ENCODE measurements at regions of chr4 and their contacts with region 1.

Region 1: DNA sequence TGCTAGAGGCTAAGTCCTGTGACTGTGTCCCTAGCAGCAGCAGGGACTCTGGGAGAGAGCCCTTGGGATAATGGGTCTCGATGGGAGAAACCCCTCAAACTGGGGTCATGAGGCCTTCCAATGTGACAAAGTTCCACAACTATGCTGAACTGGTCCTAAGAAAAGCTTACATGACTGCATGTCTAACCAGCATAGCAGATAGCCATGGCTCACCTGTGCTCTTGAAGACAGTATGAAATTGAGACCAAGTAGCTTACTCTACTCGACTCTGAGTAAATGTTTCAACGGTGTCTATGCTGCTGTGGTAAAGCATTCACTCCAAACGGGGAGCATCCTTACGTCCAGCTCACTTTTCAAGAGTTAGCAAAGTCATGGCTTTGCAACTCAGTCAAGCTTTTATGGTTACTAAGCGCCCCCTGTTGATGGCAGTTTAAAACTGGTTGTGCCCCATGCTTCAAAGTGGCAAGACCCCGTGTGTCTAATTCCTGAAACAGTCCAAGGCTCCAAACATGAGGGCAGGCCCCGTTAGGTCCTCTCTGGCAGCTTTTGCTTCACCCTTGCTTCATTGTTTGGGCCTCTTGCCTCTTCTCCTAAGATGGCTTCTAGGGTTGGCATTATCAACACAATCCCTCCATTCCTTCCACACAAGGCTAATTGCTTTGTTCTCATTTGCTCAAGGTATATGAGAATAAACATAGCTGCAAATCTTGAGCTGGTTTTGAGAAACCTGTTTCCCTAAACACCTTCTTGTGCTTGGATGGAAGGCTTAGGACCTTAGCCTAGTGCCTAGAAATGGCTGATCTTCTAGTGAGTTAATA is 46.6 kb downstream of the CCNG2 start:
- DNase-seq: peak; percentile 61
- H3K4me3 ChIP-seq: no peak overlapping the region
- H3K27ac ChIP-seq: no peak overlapping the region
- H3K27me3 ChIP-seq: peaks cover 16% of the 10 kb centered on the region
- CTCF ChIP-seq: peak; percentile 82

Region 2: GRCh38 chr4:76511947-76512346 is 691.6 kb before region 1 on chr4:
- CTCF ChIA-PET with region 1: interaction called, 16 read pairs
- POLR2A ChIA-PET with region 1: no interaction called
- DNase-seq: no peak
- H3K4me3 ChIP-seq: no peak overlapping the region
- H3K27ac ChIP-seq: no peak overlapping the region
- H3K27me3 ChIP-seq: no peaks in the 10 kb centered on the region
- CTCF ChIP-seq: no peak

Region 3: GRCh38 chr4:77065382-77065781 is 138.2 kb before region 1 on chr4:
- CTCF ChIA-PET with region 1: interaction called, 33 read pairs
- POLR2A ChIA-PET with region 1: interaction called, 3 read pairs
- DNase-seq: no peak
- H3K4me3 ChIP-seq: no peak overlapping the region
- H3K27ac ChIP-seq: peak overlapping the region; percentile 54
- H3K27me3 ChIP-seq: no peaks in the 10 kb centered on the region
- CTCF ChIP-seq: no peak

Region 4: DNA sequence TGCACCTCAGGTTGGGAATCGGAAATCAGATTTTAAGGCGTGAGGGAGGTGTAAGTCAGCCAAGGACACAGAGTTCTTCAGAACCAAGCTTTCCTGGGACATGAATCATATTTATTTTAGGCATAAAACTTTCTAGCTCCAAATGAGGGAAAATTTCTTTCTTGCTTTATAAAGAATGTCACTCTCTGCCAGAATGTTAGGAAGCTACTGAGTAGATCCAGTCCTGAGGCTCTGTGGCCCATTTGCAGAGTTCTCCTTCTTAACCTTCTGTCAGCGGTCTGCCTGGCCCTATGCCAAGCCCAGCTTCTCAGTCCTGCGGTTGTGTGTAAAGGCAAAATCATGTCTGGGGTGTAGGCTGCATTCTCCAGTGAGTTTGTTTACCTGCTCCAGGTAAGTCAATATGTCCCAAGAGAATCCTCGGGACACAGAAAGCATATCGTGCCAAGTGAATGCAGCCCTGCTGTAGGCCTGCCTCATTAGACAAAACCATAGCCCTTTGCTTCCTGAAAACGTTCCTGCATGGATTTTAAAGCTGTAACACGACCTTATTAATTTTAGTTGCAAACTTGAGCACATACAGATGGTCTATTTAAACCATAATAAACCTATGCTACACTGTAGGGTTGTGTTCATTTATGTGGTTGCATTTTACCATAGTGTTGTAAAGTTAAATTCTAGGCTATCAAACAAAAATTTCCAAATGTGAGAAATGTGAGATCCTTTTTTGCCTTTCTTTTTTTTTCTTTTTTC is 98.6 kb before region 1 on chr4:
- CTCF ChIA-PET with region 1: interaction called, 18 read pairs
- POLR2A ChIA-PET with region 1: no interaction called
- DNase-seq: no peak
- H3K4me3 ChIP-seq: no peak overlapping the region
- H3K27ac ChIP-seq: no peak overlapping the region
- H3K27me3 ChIP-seq: peaks cover 4% of the 10 kb centered on the region
- CTCF ChIP-seq: no peak

Region 5: GRCh38 chr4:77163636-77164035 is 40.0 kb before region 1 on chr4:
- CTCF ChIA-PET with region 1: interaction called, 16 read pairs
- POLR2A ChIA-PET with region 1: no interaction called
- DNase-seq: no peak
- H3K4me3 ChIP-seq: no peak overlapping the region
- H3K27ac ChIP-seq: no peak overlapping the region
- H3K27me3 ChIP-seq: no peaks in the 10 kb centered on the region
- CTCF ChIP-seq: no peak

Region 6: DNA sequence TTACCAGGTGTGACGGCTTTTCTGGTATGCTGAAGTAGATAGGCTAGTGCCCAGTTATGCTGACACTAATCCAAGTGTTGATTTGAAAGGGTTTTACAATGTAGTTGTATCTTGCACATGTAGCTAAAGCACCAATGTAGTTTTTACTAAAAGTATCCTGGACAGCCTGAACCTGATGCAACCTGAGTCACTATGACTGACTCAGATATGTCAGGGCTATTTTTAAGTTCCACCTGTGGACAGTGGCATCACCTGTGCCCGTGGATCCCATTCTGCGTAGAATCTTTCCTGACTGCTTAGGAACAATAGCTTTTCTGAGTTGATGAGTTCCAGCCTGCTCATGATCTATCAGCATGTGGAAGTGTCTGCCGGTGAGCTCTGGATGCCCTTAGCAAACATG is 11.5 kb after region 1 on chr4:
- CTCF ChIA-PET with region 1: interaction called, 18 read pairs
- POLR2A ChIA-PET with region 1: no interaction called
- DNase-seq: no peak
- H3K4me3 ChIP-seq: no peak overlapping the region
- H3K27ac ChIP-seq: no peak overlapping the region
- H3K27me3 ChIP-seq: peaks cover 28% of the 10 kb centered on the region
- CTCF ChIP-seq: no peak

Region 7: DNA sequence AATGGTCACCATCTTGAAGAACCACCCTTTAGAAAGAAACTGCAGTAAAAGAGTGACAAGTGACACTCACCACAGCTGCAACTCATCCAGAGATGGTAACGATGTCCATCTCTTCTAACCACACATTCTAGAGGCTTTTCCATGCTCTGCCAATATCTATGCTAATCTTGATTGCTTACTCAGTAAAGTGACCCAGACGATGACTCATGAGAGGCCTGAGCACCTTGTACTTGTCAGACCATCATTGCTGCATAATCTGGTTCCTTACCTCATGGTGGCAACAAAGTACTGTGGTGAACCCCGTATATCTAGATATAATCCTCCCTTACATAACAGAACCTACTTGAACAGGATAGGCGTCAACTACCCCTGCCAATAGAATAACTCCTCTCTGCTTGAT is 29.1 kb after region 1 on chr4:
- CTCF ChIA-PET with region 1: no interaction called
- POLR2A ChIA-PET with region 1: no interaction called
- DNase-seq: no peak
- H3K4me3 ChIP-seq: no peak overlapping the region
- H3K27ac ChIP-seq: no peak overlapping the region
- H3K27me3 ChIP-seq: peaks cover 5% of the 10 kb centered on the region
- CTCF ChIP-seq: no peak

Region 8: GRCh38 chr4:78213209-78213608 is 1009.6 kb after region 1 on chr4:
- CTCF ChIA-PET with region 1: no interaction called
- POLR2A ChIA-PET with region 1: no interaction called
- DNase-seq: no peak
- H3K4me3 ChIP-seq: no peak overlapping the region
- H3K27ac ChIP-seq: no peak overlapping the region
- H3K27me3 ChIP-seq: no peaks in the 10 kb centered on the region
- CTCF ChIP-seq: no peak